BJ (cell line): ENCODE measurements at regions of chr16 and their contacts with region 1.

Region 1: DNA sequence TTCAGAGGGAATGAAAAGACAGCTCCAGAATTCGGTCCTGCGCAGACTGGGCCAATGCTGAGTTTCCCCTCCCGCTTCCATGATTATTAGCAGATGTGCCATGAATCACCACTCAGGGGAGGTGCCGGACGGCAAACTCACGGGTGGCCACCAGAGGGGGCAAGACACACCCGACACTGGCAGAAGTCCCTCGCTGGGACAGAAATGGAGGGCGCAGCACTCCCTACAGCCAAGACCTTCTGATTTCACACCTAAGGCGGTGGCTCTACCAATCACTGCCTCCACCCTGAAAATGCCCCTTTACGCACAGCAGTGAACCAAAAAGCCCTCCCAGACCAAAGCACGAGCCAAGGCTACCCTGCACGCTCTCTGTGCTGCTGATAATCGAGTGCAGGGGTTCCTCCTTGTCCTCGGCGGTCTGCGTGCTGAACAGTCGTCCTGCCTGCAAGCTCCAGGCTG is 26.8 kb downstream of the TRAP1 start:
- DNase-seq: peak; percentile 91
- H3K4me3 ChIP-seq: peak overlapping the region; percentile 14
- H3K27me3 ChIP-seq: no peaks in the 10 kb centered on the region
- CTCF ChIP-seq: peak; percentile 92

Region 2: DNA sequence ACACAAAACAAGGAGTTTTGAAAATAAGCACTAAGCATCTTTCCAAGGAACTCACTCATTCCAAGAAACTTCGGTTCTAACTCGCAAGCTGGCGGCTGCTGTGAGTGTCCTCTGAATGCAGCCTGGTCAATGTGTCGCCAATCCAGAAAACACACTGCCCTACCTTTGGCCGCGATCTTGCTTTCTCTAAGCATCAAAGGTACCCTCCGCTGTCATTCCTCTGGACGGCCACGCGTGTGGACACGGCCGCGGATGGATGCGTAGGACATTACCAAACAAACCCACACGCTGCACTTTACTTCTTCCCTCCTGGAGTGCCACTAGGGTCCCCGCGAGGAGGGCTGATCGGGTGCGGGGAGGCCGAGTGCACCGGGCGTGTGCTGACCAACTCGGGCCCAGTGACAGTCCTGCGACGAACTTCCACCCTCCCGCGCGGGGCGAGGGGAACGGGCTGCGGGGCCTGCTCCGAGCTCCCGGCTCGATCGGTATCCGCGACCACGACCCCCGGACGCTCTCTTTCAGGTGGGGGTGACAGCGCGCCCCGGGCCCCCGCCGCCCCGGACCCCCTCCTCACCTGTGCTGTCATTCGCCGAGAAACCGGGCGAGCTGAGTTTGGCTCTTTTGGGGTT is 188.9 kb after region 1 on chr16:
- CTCF ChIA-PET with region 1: interaction called, 20 read pairs
- POLR2A ChIA-PET with region 1: no interaction called
- DNase-seq: no peak
- H3K4me3 ChIP-seq: peak overlapping the region; percentile 90
- H3K27me3 ChIP-seq: no peaks in the 10 kb centered on the region
- CTCF ChIP-seq: no peak